ENCODE measurements at regions of chr10 and their contacts with region 1.

Region 1: GRCh38 chr10:43138021-43138756 is at the start of gene CSGALNACT2:
- DNase-seq: peak; percentile 82 to 92 (median 89)
- ATAC-seq: peak; percentile 86
- H3K4me3 ChIP-seq: peak within 1 kb of the TSS; percentile 83
- H3K4me3 Mint-ChIP-seq: peak within 1 kb of the TSS; percentile 93 to 100 (median 98)
- H3K27ac ChIP-seq: peak within 1 kb of the TSS; percentile 93
- H3K27ac Mint-ChIP-seq: peak within 1 kb of the TSS; percentile 95 to 100 (median 99)
- H3K4me1 ChIP-seq: peaks cover 24 to 25% of the 10 kb centered on the region in 2 donors
- H3K4me1 Mint-ChIP-seq: peaks cover 40 to 70% (median 57%) of the 10 kb centered on the region in 7 donors
- H3K27me3 ChIP-seq: no peaks in the 10 kb centered on the region
- H3K27me3 Mint-ChIP-seq: peaks cover 0 to 2% (median 0%) of the 10 kb centered on the region in 5 donors
- total RNA-seq, gene CSGALNACT2: 47.3 to 57.5 (median 52.3) TPM

Region 2: DNA sequence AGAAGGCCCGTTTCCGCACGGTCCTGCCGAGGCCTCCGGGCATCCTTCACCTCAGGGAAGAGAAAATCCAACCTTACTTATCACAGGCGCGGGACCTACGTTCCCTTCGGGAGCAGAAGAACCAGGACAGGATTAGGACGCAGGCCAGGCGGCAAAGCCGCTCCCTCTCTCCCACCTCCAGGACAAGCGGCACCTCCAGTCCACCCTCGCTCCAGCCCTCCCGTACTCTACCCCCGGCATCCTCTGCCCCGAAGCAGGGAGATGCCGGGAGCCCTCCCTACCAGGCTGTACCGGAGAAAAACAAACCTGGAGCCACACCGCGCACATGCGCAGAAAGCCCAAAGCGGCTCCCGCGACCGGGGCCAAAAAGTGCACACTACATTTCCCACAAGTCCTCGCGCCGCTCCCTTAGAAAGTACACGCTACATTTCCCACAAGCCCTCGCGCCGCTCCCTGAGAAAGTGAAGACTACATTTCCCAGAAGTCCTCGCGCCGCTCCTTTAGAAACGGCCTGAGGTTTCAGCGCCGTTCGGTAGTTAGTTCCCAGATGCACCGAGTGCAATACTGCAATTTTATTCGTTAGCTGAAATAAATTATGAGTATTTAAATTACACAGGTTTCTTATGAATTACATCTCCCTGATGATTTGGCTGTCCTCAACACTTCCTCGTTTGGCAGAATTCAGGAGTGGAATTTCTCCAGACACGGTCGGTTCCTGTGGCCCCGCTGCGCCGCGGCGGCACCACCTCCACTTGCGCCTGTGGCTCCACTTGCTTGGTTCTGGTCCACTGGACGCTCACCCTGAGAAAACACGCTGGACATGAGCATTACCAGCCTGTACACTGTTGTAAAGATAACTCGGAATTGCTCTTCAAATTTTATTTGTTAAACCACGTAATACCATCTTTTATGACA is 585.4 kb before region 1 on chr10:
- CTCF ChIA-PET with region 1: no interaction called
- POLR2A ChIA-PET with region 1: no interaction called
- intact Hi-C with region 1: loop called (anchors 2 to 10 kb)
- DNase-seq: peak; percentile 83 to 92 (median 91)
- ATAC-seq: peak; percentile 98
- H3K4me3 ChIP-seq: peak overlapping the region; percentile 95
- H3K4me3 Mint-ChIP-seq: peak overlapping the region; percentile 96 to 100 (median 98)
- H3K27ac ChIP-seq: peak overlapping the region; percentile 87
- H3K27ac Mint-ChIP-seq: peak overlapping the region; percentile 86 to 98 (median 96)
- H3K4me1 ChIP-seq: peaks cover 0 to 16% of the 10 kb centered on the region in 2 donors
- H3K4me1 Mint-ChIP-seq: peaks cover 24 to 49% (median 45%) of the 10 kb centered on the region in 7 donors
- H3K27me3 ChIP-seq: no peaks in the 10 kb centered on the region
- H3K27me3 Mint-ChIP-seq: no peaks in the 10 kb centered on the region

Region 3: DNA sequence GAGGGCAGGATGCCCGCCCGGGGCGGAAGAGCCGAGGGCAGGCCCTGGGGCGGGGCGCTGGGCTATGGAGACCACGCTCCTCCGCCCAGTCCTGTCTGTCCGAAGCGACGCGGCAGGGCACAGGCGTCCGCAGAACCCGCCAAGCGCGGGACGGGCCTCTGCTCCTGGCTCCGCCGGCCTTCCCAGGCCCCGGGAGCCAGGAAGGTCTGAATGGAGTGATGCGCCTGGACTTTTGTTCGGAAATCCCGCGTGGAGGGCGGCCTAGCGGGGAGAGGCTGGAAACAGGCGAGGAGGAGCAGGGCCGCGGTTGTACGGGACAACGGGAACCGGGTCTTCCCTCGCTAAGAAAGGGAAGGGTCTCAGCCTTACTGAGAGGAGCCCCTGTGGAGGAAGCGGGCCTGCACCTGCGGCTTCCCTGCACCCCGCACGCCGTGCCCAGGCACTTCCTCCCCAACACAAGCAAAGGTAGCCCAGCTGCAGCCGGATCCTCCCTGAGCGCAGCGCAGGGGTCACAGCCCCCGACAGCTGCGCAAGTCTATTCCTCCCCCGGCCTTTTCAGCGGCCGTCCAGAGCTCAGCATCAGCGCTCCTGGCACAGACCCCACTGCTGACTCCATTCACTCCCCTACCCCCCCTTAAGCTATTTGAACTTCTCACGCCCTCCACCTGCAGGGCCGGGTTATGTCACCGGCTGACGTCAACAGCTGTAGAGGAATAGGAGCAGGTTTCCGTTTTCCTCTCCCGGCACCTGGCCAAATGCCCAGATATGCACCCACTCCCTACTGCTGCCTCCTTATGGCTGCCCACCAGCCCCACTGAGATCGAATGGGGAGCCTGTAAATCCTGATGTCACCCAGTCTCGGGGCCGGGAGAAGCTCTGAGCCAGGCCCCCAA is 204.5 kb before region 1 on chr10:
- CTCF ChIA-PET with region 1: no interaction called
- POLR2A ChIA-PET with region 1: interaction called, 3 read pairs
- intact Hi-C with region 1: loop called in 1 of 2 experiments (anchors 1 kb)
- DNase-seq: peak in 8 of 9 donors; percentile 24 to 81 (median 66)
- ATAC-seq: peak; percentile 66
- H3K4me3 ChIP-seq: peak overlapping the region; percentile 60
- H3K4me3 Mint-ChIP-seq: peak overlapping the region in 9 of 10 donors; percentile 87 to 93 (median 91)
- H3K27ac ChIP-seq: peak overlapping the region; percentile 73
- H3K27ac Mint-ChIP-seq: peak overlapping the region in 7 of 9 donors; percentile 82 to 95 (median 90)
- H3K4me1 ChIP-seq: peaks cover 0 to 12% of the 10 kb centered on the region in 2 donors
- H3K4me1 Mint-ChIP-seq: peaks cover 9 to 25% (median 19%) of the 10 kb centered on the region in 7 donors
- H3K27me3 ChIP-seq: no peaks in the 10 kb centered on the region
- H3K27me3 Mint-ChIP-seq: peaks cover 5 to 38% (median 31%) of the 10 kb centered on the region in 5 donors

Region 4: DNA sequence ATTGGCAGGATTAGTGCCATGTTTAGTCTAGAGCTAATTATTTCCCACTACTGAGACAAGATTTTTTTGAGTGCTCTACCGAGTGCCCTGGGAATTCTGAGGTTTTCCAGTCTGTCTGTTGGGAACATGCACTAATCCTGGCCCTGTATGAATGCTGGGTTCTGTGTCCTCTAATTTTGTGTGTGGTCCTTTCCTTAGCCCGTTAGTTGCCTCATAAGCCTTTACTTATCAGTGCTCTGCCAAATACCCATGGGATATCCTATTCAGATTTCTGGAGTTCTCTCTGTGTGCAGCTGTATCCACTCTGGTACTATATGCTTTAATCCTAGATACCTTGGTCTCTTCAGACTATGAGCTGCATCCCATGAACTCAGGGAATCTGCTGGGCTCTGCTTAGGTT is 13.2 kb after region 1 on chr10:
- CTCF ChIA-PET with region 1: no interaction called
- POLR2A ChIA-PET with region 1: interaction called, 25 read pairs
- intact Hi-C with region 1: no loop called
- DNase-seq: no peak
- ATAC-seq: no peak
- H3K4me3 ChIP-seq: no peak overlapping the region
- H3K4me3 Mint-ChIP-seq: peak overlapping the region in 9 of 10 donors; percentile 4 to 62 (median 40)
- H3K27ac ChIP-seq: no peak overlapping the region
- H3K27ac Mint-ChIP-seq: peak overlapping the region in 4 of 9 donors; percentile 16 to 63 (median 38)
- H3K4me1 ChIP-seq: peaks cover 4 to 21% of the 10 kb centered on the region in 2 donors
- H3K4me1 Mint-ChIP-seq: peaks cover 47 to 80% (median 73%) of the 10 kb centered on the region in 7 donors
- H3K27me3 ChIP-seq: no peaks in the 10 kb centered on the region
- H3K27me3 Mint-ChIP-seq: no peaks in the 10 kb centered on the region

Region 5: GRCh38 chr10:43204943-43205671 is 66.9 kb after region 1 on chr10:
- CTCF ChIA-PET with region 1: interaction called, 7 read pairs
- POLR2A ChIA-PET with region 1: interaction called, 7 read pairs
- intact Hi-C with region 1: loop called (anchors 1 kb)
- DNase-seq: peak in 8 of 9 donors; percentile 25 to 52 (median 44)
- ATAC-seq: peak; percentile 69
- H3K4me3 ChIP-seq: no peak overlapping the region
- H3K4me3 Mint-ChIP-seq: no peak overlapping the region
- H3K27ac ChIP-seq: no peak overlapping the region
- H3K27ac Mint-ChIP-seq: peak overlapping the region in 2 of 9 donors; percentile 38 to 69
- H3K4me1 ChIP-seq: peaks cover 0 to 5% of the 10 kb centered on the region in 2 donors
- H3K4me1 Mint-ChIP-seq: peaks cover 0 to 9% (median 6%) of the 10 kb centered on the region in 7 donors
- H3K27me3 ChIP-seq: no peaks in the 10 kb centered on the region
- H3K27me3 Mint-ChIP-seq: no peaks in the 10 kb centered on the region

Region 6: GRCh38 chr10:43361986-43362839 is 224.0 kb after region 1 on chr10:
- CTCF ChIA-PET with region 1: no interaction called
- POLR2A ChIA-PET with region 1: interaction called, 6 read pairs
- intact Hi-C with region 1: loop called in 1 of 2 experiments (anchors 1 kb)
- DNase-seq: peak; percentile 86 to 98 (median 97)
- ATAC-seq: peak; percentile 98
- H3K4me3 ChIP-seq: peak overlapping the region; percentile 92
- H3K4me3 Mint-ChIP-seq: peak overlapping the region; percentile 92 to 100 (median 97)
- H3K27ac ChIP-seq: peak overlapping the region; percentile 88
- H3K27ac Mint-ChIP-seq: peak overlapping the region; percentile 96 to 99 (median 97)
- H3K4me1 ChIP-seq: peaks cover 4 to 14% of the 10 kb centered on the region in 2 donors
- H3K4me1 Mint-ChIP-seq: peaks cover 13 to 33% (median 29%) of the 10 kb centered on the region in 7 donors
- H3K27me3 ChIP-seq: no peaks in the 10 kb centered on the region
- H3K27me3 Mint-ChIP-seq: no peaks in the 10 kb centered on the region

Region 7: GRCh38 chr10:43420369-43421200 is 282.4 kb after region 1 on chr10:
- CTCF ChIA-PET with region 1: no interaction called
- POLR2A ChIA-PET with region 1: interaction called, 11 read pairs
- intact Hi-C with region 1: no loop called
- DNase-seq: peak; percentile 69 to 86 (median 81)
- ATAC-seq: peak; percentile 94
- H3K4me3 ChIP-seq: peak overlapping the region; percentile 62
- H3K4me3 Mint-ChIP-seq: peak overlapping the region; percentile 87 to 98 (median 92)
- H3K27ac ChIP-seq: peak overlapping the region; percentile 95
- H3K27ac Mint-ChIP-seq: peak overlapping the region; percentile 91 to 99 (median 98)
- H3K4me1 ChIP-seq: peaks cover 24 to 29% of the 10 kb centered on the region in 2 donors
- H3K4me1 Mint-ChIP-seq: peaks cover 17 to 46% (median 41%) of the 10 kb centered on the region in 7 donors
- H3K27me3 ChIP-seq: no peaks in the 10 kb centered on the region
- H3K27me3 Mint-ChIP-seq: no peaks in the 10 kb centered on the region

Measured in naive thymus-derived CD4-positive, alpha-beta T cell (primary cell).